Panc1 (cell line): ENCODE measurements at regions of chr15 and their contacts with region 1.

Region 1: GRCh38 chr15:64865998-64866520 is 24.3 kb downstream of the PLEKHO2 start:
- DNase-seq: no peak
- ATAC-seq: peak; percentile 33; the same call in 1 of the 2 replicates
- H3K4me3 ChIP-seq: no peak overlapping the region
- H3K27ac ChIP-seq: no peak overlapping the region
- H3K4me1 ChIP-seq: no peaks in the 10 kb centered on the region; the same call in 1 of the 2 replicates
- H3K27me3 ChIP-seq: no peaks in the 10 kb centered on the region
- CTCF ChIP-seq: no peak

Region 2: GRCh38 chr15:64460206-64460734 is 405.8 kb before region 1 on chr15 and contains the start of gene ZNF609:
- CTCF ChIA-PET with region 1: no interaction called
- POLR2A ChIA-PET with region 1: no interaction called
- in situ Hi-C with region 1: no loop called
- intact Hi-C with region 1: no loop called
- DNase-seq: peak; percentile 64
- ATAC-seq: peak; percentile 93
- H3K4me3 ChIP-seq: peak within 1 kb of the TSS; percentile 58 to 89
- H3K27ac ChIP-seq: peak within 1 kb of the TSS; percentile 89
- H3K4me1 ChIP-seq: peaks cover 38% of the 10 kb centered on the region
- H3K27me3 ChIP-seq: no peaks in the 10 kb centered on the region
- CTCF ChIP-seq: no peak
- total RNA-seq, gene ZNF609: 47.2 TPM

Region 3: DNA sequence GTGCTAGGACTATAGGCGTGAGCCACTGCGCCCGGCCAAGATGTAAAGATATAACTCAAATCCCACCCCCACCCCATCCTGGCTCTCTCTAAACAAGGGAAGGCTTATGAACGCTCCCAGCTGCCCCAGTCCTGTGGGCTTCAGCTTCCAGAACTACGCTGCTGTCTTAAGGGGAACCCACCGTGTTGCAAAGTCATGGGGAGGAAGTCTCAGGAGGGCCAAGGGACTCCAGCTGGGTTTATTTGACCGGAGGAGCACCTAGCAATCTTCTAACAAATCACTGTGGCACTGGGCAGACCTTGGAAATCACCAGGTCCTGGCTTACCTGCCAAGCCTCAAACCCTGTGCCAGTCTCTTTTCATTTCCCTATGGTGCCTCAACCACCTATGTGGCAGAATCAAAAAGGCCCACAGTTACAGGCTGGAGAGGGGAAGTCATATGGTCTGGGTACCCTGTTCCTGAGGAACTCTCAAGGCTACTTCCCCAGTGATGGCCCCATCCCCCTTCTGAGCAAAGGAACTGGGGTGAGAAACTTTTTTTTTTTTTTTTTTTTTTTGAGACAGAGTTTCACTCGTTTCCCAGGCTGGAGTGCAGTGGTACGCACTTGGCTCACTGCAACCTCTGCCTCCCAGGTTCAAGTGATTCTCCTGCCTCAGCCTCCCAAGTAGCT is 174.0 kb before region 1 on chr15:
- CTCF ChIA-PET with region 1: interaction called, 11 read pairs
- POLR2A ChIA-PET with region 1: no interaction called
- in situ Hi-C with region 1: no loop called
- intact Hi-C with region 1: no loop called
- DNase-seq: no peak
- ATAC-seq: no peak
- H3K4me3 ChIP-seq: no peak overlapping the region
- H3K27ac ChIP-seq: no peak overlapping the region
- H3K4me1 ChIP-seq: peaks cover 19% of the 10 kb centered on the region
- H3K27me3 ChIP-seq: no peaks in the 10 kb centered on the region
- CTCF ChIP-seq: no peak

Region 4: GRCh38 chr15:65355173-65355987 is 489.3 kb after region 1 on chr15:
- CTCF ChIA-PET with region 1: no interaction called
- POLR2A ChIA-PET with region 1: no interaction called
- in situ Hi-C with region 1: no loop called
- intact Hi-C with region 1: no loop called
- DNase-seq: no peak
- ATAC-seq: peak; percentile 70
- H3K4me3 ChIP-seq: peak overlapping the region; percentile 30 to 45
- H3K27ac ChIP-seq: no peak overlapping the region
- H3K4me1 ChIP-seq: peaks cover 3% of the 10 kb centered on the region; the same call in 1 of the 2 replicates
- H3K27me3 ChIP-seq: peaks cover 16% of the 10 kb centered on the region
- CTCF ChIP-seq: no peak